Caco-2 (cell line): ENCODE measurements at regions of chr20 and their contacts with region 1.

Region 1: DNA sequence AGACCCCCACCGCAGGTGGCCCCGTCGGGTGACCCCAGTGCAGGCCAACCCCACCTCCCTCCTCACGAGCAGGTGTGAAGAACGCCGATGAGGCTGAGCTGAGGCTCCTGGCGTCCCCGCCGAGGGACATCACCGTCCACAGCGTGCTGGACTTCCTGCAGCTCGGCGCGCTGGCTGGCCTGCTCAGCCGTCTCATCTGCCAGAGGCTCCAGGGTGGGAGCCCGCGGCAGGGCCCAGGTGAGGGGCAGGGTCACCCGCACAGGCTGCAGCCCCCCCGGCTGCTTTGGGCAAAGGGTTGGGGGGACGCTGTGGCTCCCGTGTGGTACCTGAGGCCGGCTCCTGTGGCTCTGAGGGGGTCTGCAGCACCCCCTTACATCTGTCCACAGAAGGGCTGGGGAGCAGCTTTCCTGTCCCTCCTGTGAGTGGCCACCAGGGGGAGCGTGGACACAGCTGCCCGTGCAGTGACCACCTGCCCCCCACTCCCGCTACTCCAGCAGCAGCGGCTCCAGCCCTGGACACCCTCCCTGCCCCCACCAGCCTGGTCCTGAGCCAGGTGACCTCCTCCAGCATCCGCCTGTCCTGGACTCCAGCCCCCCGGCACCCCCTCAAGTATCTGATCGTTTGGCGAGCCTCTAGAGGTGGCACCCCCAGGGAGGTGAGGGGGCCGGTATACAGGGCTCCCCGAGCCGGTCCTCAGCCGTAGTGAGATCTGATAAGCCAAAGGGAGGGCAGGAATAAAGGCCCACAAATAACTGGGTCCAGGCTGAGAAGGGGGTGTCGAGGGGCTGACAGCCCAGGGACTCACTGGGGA is 16.5 kb downstream of the COL20A1 start:
- DNase-seq: peak; percentile 79 to 84
- H3K4me3 ChIP-seq: no peak overlapping the region
- H3K4me3 Mint-ChIP-seq: no peak overlapping the region
- H3K27ac Mint-ChIP-seq: no peak overlapping the region
- H3K4me1 ChIP-seq: no peaks in the 10 kb centered on the region
- H3K4me1 Mint-ChIP-seq: no peaks in the 10 kb centered on the region
- H3K27me3 ChIP-seq: peaks cover 1% of the 10 kb centered on the region; the same call in 1 of the 2 replicates
- H3K27me3 Mint-ChIP-seq: peaks cover 3% of the 10 kb centered on the region
- CTCF ChIP-seq: peak; percentile 99 to 100

Region 2: GRCh38 chr20:63142933-63143332 is 166.5 kb before region 1 on chr20:
- CTCF ChIA-PET with region 1: interaction called, 10 read pairs
- POLR2A ChIA-PET with region 1: no interaction called
- intact Hi-C with region 1: no loop called
- DNase-seq: peak in 1 of 2 experiments; percentile 26
- H3K4me3 ChIP-seq: no peak overlapping the region
- H3K4me3 Mint-ChIP-seq: no peak overlapping the region
- H3K27ac Mint-ChIP-seq: no peak overlapping the region
- H3K4me1 ChIP-seq: no peaks in the 10 kb centered on the region
- H3K4me1 Mint-ChIP-seq: no peaks in the 10 kb centered on the region
- H3K27me3 ChIP-seq: no peaks in the 10 kb centered on the region; the same call in 1 of the 2 replicates
- H3K27me3 Mint-ChIP-seq: peaks cover 41% of the 10 kb centered on the region
- CTCF ChIP-seq: no peak

Region 3: GRCh38 chr20:63370618-63371187 is 61.2 kb after region 1 on chr20:
- CTCF ChIA-PET with region 1: interaction called, 20 read pairs
- POLR2A ChIA-PET with region 1: no interaction called
- intact Hi-C with region 1: no loop called
- DNase-seq: no peak
- H3K4me3 ChIP-seq: no peak overlapping the region
- H3K4me3 Mint-ChIP-seq: no peak overlapping the region
- H3K27ac Mint-ChIP-seq: no peak overlapping the region
- H3K4me1 ChIP-seq: peaks cover 10% of the 10 kb centered on the region; the same call in 1 of the 2 replicates
- H3K4me1 Mint-ChIP-seq: no peaks in the 10 kb centered on the region
- H3K27me3 ChIP-seq: no peaks in the 10 kb centered on the region
- H3K27me3 Mint-ChIP-seq: peaks cover 4% of the 10 kb centered on the region
- CTCF ChIP-seq: no peak

Region 4: GRCh38 chr20:63381807-63382322 is 72.4 kb after region 1 on chr20:
- CTCF ChIA-PET with region 1: interaction called, 135 read pairs
- POLR2A ChIA-PET with region 1: no interaction called
- intact Hi-C with region 1: loop called (anchors 1 kb)
- DNase-seq: peak in 1 of 2 experiments; percentile 80
- H3K4me3 ChIP-seq: no peak overlapping the region
- H3K4me3 Mint-ChIP-seq: no peak overlapping the region
- H3K27ac Mint-ChIP-seq: no peak overlapping the region
- H3K4me1 ChIP-seq: no peaks in the 10 kb centered on the region
- H3K4me1 Mint-ChIP-seq: peaks cover 6% of the 10 kb centered on the region
- H3K27me3 ChIP-seq: no peaks in the 10 kb centered on the region
- H3K27me3 Mint-ChIP-seq: peaks cover 12% of the 10 kb centered on the region
- CTCF ChIP-seq: peak; percentile 100

Region 5: GRCh38 chr20:63482856-63483695 is 173.6 kb after region 1 on chr20:
- CTCF ChIA-PET with region 1: interaction called, 4 read pairs
- POLR2A ChIA-PET with region 1: no interaction called
- intact Hi-C with region 1: loop called (anchors 10 kb)
- DNase-seq: no peak
- H3K4me3 ChIP-seq: no peak overlapping the region
- H3K4me3 Mint-ChIP-seq: no peak overlapping the region
- H3K27ac Mint-ChIP-seq: no peak overlapping the region
- H3K4me1 ChIP-seq: 0 out of 2 replicates have a peak, but pooled peaks cover 5% of the 10 kb centered on the region
- H3K4me1 Mint-ChIP-seq: no peaks in the 10 kb centered on the region
- H3K27me3 ChIP-seq: peaks cover 2% of the 10 kb centered on the region; the same call in 1 of the 2 replicates
- H3K27me3 Mint-ChIP-seq: peaks cover 27% of the 10 kb centered on the region
- CTCF ChIP-seq: no peak